Ovary (tissue), 10 donors: ENCODE measurements at regions of chr10 and their contacts with region 1.

Region 1: DNA sequence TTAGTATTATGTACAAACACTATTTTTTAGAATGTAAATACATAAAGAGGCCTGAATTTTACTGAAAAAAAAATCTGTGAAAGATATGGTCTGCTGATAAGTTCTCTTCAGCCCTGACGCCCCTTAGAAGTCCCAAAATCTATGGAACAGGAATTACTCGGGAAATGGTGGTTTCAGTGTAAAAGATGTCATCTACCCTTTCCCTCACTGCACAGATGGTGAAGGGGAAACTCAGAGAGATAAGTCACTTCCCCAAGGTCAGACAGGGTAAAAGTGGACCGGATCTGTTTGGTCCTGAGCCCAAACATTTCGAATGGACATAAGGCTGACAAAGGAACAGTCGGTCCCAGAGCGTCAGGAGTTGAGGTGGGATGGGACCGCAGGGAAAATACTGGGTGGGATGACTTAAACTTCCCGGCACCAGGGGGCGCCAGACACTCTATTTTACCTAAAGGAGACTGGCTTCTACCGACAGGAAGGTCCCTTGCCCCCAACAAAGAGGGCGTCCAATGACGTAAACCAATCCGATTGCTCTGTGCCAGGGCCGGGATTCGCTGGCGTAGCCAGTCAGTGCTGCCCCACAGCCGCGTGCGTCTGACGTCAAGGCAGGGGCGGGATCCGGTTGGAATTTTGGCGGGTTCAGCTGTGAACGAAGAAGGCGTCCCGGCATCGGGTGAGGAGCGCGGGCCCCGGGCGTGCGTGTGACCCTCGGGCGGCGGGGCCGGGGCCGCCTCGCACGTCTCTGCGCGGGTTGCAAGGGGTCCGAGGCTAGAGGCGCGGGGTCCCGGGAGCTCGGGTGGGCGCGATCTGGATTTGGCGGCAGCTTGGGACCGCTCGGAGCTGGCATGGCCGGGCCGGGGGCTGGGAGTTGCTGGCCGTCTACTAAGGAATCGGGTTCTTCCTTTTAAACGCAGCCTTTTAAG is at the start of gene MCM10:
- DNase-seq: peak; percentile 98 to 99 (median 99)
- H3K4me3 ChIP-seq: peak within 1 kb of the TSS; percentile 33
- H3K27ac ChIP-seq: no peak within 1 kb of the TSS
- H3K4me1 ChIP-seq: peaks cover 2% of the 10 kb centered on the region
- H3K27me3 ChIP-seq: no peaks in the 10 kb centered on the region
- CTCF ChIP-seq: peak; percentile 88 to 96 (median 94)
- EP300 ChIP-seq: no peak
- POLR2A ChIP-seq: no peak
- total RNA-seq, gene MCM10: 0.32 to 1.7 (median 0.89) TPM in 5 of 7 donors, not detected in the others

Region 2: GRCh38 chr10:12907656-12908055 is 253.5 kb before region 1 on chr10:
- intact Hi-C with region 1: no loop called
- DNase-seq: no peak
- H3K4me3 ChIP-seq: no peak overlapping the region
- H3K27ac ChIP-seq: no peak overlapping the region
- H3K4me1 ChIP-seq: peaks cover 4% of the 10 kb centered on the region
- H3K27me3 ChIP-seq: no peaks in the 10 kb centered on the region
- CTCF ChIP-seq: no peak
- EP300 ChIP-seq: no peak
- POLR2A ChIP-seq: no peak

Region 3: DNA sequence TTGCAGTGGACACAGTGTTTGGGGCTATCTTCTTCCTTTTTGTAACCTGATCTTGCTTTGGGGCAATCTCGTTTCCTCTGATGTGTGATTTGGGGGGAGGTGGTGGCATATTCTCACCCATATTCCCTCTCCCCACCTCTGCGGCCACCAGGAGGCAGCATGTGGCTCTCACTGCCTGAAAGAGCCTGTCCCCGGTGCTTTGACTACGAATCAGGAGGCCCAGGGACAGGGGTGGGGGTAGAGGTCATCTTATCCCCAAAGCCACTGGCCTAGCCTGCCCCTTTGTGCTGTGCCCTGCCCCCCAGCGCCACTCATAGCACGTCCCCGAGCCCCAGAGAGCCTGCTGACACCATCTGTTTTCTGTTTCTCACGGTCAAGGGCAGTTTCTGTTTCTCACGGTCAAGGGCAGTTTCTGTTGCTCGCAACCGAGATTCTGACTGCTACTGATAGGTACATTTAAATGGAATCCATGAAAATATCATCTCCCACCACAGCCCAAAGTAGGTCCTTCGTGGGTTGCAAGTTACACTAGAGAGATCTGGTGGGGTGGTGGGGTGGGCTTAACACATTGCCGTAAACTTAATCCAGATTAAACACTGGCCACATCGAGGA is 110.5 kb after region 1 on chr10:
- intact Hi-C with region 1: loop called in 1 of 4 experiments (anchors 10 kb)
- DNase-seq: peak; percentile 35 to 62 (median 49)
- H3K4me3 ChIP-seq: no peak overlapping the region
- H3K27ac ChIP-seq: peak overlapping the region in 1 of 2 donors; percentile 65
- H3K4me1 ChIP-seq: peaks cover 15% of the 10 kb centered on the region
- H3K27me3 ChIP-seq: no peaks in the 10 kb centered on the region
- CTCF ChIP-seq: peak in 2 of 3 donors; percentile 5 to 24
- EP300 ChIP-seq: no peak
- POLR2A ChIP-seq: no peak

Region 4: GRCh38 chr10:13291821-13292773 is 130.9 kb after region 1 on chr10:
- intact Hi-C with region 1: loop called in 1 of 4 experiments (anchors 5 kb)
- DNase-seq: peak in 1 of 5 donors; percentile 1
- H3K4me3 ChIP-seq: no peak overlapping the region
- H3K27ac ChIP-seq: no peak overlapping the region
- H3K4me1 ChIP-seq: no peaks in the 10 kb centered on the region
- H3K27me3 ChIP-seq: no peaks in the 10 kb centered on the region
- CTCF ChIP-seq: no peak
- EP300 ChIP-seq: no peak
- POLR2A ChIP-seq: no peak

Region 5: DNA sequence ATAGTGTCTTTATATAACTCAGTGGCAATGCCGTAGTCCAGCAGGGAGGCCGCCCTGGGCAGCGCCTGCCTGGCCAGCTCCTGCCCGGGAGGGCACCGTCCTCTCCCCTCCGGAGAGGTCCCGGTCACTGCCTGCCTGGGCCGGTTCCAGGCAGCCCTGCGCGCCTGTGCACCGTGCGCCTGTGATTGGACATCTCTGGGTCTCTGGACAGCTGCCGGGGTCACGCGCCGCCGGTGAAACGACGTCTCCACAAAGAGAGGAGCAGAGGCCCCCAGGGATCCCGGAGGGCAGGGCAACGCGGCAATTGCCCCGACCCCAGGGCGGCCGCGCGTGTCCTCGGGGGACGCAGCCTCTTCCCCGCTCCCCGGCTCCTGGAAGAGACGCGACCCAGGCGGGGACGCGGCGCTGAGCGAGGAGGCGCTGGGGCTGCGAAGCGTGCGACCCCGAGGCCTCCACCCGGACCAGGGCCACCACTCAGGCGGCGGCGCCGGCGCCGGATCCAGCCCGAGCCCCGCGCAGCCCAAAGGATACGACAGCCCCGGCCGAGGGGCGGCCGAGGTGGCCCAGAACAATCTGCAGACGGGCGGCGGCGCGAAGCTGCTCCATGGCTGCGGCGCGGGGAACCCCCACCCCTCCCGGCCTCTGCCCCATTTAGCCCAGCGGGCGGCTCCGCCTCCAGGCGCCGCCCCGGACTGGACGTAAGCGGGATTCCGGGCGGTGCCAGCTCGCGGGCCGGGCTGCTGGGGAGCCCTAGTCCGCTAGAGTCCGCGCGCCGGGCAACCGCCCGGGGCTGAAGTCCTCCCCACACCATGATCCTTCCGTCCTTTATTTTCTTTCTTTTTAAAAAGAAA is 138.5 kb after region 1 on chr10 and contains the start of gene PHYH:
- intact Hi-C with region 1: loop called in 2 of 4 experiments (anchors 5 kb)
- DNase-seq: peak; percentile 85 to 92 (median 89)
- H3K4me3 ChIP-seq: peak within 1 kb of the TSS; percentile 57
- H3K27ac ChIP-seq: peak within 1 kb of the TSS; percentile 95 to 98
- H3K4me1 ChIP-seq: peaks cover 3% of the 10 kb centered on the region
- H3K27me3 ChIP-seq: no peaks in the 10 kb centered on the region
- CTCF ChIP-seq: peak in 2 of 3 donors; percentile 1 to 22
- EP300 ChIP-seq: no peak
- POLR2A ChIP-seq: peak; percentile 74
- total RNA-seq, gene PHYH: 20.0 to 49.7 (median 39.5) TPM